ENCODE measurements at regions of chr6 and their contacts with region 1.

Region 1: DNA sequence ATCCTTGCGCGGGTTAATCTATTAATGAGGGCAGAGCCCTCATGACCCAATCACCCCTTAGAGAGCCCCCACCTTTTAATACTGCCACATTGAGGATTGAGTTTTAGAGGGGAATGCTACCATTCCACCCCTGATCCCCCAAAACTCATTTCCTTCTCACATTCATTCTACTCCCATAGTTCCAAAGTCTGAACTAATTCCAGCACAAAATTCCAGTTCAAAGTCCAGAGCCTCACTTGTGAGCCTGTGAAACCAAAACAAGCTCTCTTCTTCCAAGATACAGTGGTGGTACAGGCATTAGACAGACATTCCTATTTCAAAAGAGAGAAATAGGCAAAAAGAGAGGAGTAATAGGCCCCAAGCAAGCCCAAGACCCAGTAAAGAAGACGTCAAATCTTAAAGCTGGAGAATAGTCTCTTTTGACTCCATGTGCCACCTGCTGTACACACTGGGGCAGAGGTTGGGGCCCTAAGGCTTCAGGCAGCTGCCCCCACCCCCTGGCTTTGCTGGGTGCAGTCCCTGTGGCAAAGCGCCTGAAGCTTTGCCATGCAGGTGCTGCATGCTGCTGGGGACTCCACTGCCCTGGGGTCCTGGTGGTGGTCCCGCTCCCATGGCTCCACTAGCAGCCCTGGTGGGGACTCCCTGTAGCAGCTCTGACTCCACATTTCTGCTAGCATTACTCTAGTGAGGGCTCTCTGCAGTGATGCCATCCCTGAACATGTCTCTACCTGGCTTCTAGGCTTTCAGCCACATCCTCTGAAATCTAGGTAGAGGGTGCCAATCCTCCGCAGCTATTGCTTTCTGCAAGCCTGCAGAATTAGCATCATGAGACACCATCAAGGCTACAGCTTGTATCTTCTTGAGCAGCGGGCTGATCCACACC is 41.3 kb downstream of the RSPH3 start:
- DNase-seq: no peak
- H3K4me3 Mint-ChIP-seq: no peak overlapping the region
- H3K27ac Mint-ChIP-seq: no peak overlapping the region
- H3K4me1 Mint-ChIP-seq: peaks cover 8% of the 10 kb centered on the region
- H3K27me3 Mint-ChIP-seq: peaks cover 5% of the 10 kb centered on the region

Region 2: DNA sequence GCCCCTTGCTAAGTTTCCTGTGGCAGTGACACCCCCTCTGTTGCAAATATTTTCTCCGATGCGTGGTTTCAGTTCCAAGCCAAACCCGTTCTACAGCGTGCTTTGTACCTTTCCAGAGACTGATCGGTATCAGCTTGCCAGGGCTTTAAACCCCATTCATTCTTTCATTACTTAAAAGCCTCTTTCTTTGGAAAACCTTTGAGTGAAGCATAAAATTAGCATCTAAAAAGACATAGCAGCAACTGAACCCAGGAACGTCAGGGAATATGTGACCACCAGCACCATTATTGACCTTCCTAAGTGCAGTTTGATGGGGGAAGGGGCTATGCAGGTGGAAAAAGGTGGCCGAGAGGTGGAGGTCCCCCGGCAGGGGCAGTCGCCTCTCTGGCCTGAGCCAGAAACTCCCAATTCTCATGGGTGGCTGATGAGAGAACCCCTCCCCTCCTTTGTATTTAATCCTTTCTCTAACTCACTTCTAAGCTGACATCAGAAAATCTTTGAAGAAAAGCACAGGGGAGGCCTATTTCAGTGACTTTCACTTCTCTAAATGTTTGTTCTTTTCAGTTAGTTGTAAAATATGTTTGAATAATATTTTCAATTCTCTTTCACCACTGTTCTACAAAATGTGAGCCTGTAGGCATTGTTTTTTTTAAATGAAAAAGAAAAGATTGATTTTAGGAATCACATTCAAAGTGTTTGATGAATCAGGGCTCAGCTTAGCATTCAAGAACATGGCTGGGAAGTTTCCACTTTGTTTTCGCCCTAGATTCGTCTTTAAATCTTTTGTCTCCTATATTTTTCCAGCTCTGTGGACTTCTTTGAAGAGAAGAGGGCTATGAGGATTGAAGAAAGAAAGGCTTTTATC is 48.0 kb before region 1 on chr6:
- intact Hi-C with region 1: loop called (anchors 5 kb)
- DNase-seq: no peak
- H3K4me3 Mint-ChIP-seq: no peak overlapping the region
- H3K27ac Mint-ChIP-seq: no peak overlapping the region
- H3K4me1 Mint-ChIP-seq: peaks cover 25% of the 10 kb centered on the region
- H3K27me3 Mint-ChIP-seq: no peaks in the 10 kb centered on the region